ENCODE measurements at regions of chr9 and their contacts with region 1.

Region 1: DNA sequence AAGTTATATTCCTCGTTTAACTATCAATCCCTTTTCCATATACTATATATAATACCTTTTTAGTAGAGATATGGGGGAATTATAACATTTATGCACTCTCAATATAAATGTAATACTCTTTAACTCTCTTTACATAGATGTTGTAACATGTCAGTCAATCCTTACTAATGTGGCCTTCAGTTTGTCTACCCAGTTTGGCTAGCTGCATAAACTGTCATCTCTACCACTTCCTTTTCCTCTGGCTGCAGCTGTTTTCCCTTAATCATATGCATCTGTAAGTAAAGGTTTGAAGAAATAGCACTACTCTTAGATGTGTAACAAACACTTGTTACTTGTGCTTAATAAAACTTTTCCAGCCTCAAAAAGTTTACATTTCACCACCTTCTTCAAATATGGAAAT is 13.4 kb downstream of the ABHD17B start:
- DNase-seq: no peak
- H3K4me3 Mint-ChIP-seq: no peak overlapping the region
- H3K27ac Mint-ChIP-seq: no peak overlapping the region
- H3K4me1 Mint-ChIP-seq: peaks cover 61% of the 10 kb centered on the region
- H3K27me3 Mint-ChIP-seq: no peaks in the 10 kb centered on the region

Region 2: DNA sequence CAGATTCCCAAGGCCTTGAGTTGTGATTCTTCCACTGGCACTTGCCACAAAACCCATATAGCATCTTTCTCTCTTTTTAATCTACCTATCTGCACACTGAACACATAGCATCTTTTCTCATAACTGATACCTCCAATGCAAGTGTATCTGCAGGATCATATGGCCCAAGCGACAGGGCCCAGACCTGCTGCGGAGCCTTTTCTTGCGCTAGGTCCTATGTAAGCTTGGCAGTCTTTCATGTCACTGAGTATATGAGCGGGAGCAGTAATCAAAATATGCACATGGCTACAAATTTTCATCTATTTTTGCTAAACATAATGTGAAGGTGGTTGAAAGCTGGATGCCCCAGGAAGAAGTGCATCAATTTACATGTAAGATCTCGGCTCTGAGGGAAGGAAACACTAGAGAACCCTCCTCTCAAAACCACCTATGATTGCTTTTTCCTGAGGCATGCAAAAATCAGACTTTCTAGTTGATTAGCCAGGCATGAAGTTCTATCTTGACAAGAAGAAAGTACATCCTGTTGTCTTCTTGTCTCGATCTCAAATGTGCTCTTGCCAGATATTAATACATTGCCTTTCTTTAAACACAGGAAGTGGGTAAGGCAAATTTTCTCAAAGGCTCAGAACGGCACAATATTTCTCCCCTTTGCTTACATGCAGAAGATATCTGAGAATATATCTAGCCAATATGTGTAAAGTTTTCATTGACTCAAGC is 102.3 kb before region 1 on chr9:
- CTCF ChIA-PET with region 1: no interaction called
- POLR2A ChIA-PET with region 1: no interaction called
- intact Hi-C with region 1: loop called (anchors 5 kb)
- DNase-seq: no peak
- H3K4me3 Mint-ChIP-seq: peak overlapping the region; percentile 9
- H3K27ac Mint-ChIP-seq: peak overlapping the region; percentile 83
- H3K4me1 Mint-ChIP-seq: peaks cover 54% of the 10 kb centered on the region
- H3K27me3 Mint-ChIP-seq: no peaks in the 10 kb centered on the region

Region 3: DNA sequence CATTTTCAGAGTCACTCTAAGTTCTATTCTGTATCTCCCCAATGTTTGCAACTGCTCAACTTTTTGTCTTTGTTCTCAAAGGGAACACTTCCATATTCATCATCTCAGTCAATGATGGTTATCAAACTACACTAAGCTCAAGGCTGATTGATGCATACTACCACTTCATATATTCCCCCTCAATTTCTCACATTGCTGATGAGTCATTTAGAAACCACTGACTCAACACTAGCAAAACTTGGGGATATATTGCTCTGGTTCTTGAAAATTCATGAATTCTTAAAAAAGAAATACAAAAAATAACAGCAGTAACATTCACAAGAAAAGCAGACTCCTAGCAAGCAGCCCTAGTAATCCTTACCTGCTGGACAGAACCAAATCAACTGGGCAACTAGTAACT is 38.8 kb before region 1 on chr9:
- CTCF ChIA-PET with region 1: no interaction called
- POLR2A ChIA-PET with region 1: no interaction called
- intact Hi-C with region 1: loop called (anchors 5 kb)
- DNase-seq: no peak
- H3K4me3 Mint-ChIP-seq: no peak overlapping the region
- H3K27ac Mint-ChIP-seq: peak overlapping the region; percentile 0
- H3K4me1 Mint-ChIP-seq: peaks cover 8% of the 10 kb centered on the region
- H3K27me3 Mint-ChIP-seq: no peaks in the 10 kb centered on the region

Measured in activated CD4-positive, alpha-beta memory T cell treated with anti-CD3 and anti-CD28 coated beads for 36 hours (primary cell).